ENCODE measurements at regions of chr14 and their contacts with region 1.

Region 1: DNA sequence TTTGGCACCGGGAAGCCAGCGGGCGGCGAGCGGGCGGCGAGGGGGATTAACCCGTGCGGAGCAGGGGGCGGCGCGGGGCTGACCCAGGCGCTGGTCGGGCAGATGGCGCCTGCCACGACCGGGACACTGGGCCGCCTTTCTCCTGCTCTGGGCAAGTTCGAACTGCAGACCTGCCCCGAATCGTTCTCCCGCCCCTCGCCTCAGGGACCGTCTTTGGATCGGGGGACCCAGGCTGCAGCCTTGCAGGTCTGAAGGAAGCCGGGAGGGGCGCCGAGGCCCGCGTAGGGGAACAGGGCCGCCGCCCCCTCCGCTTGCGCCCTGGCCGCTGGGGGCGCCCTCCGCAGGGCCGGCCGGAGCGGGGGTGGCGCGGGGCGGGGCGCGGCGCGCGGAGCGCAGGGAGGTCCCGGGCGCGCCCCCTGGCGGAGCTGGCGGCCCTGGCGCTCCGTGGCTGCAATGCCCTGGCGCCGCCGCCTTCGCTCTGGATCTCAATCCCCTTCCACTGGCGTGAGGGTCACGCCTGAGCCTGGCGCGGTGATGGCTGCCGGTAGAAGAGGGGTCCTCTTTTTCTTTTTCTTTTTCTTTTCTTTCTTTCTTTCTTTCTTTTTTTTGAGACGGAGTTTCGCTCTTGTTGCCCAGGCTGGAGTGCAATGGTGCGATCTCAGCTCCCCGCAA is 449 bp upstream of the LTBP2 start:
- DNase-seq: peak; percentile 70 to 94
- H3K4me3 ChIP-seq: peak overlapping the region; percentile 84
- H3K4me3 Mint-ChIP-seq: peak overlapping the region; percentile 74
- H3K27ac Mint-ChIP-seq: no peak overlapping the region
- H3K4me1 ChIP-seq: no peaks in the 10 kb centered on the region
- H3K4me1 Mint-ChIP-seq: peaks cover 10% of the 10 kb centered on the region
- H3K27me3 ChIP-seq: no peaks in the 10 kb centered on the region
- H3K27me3 Mint-ChIP-seq: peaks cover 8% of the 10 kb centered on the region
- CTCF ChIP-seq: peak; percentile 53 to 66

Region 2: GRCh38 chr14:74630881-74631690 is 18.6 kb after region 1 on chr14:
- CTCF ChIA-PET with region 1: interaction called, 10 read pairs
- POLR2A ChIA-PET with region 1: no interaction called
- intact Hi-C with region 1: loop called (anchors 2 kb)
- DNase-seq: no peak
- H3K4me3 ChIP-seq: no peak overlapping the region
- H3K4me3 Mint-ChIP-seq: no peak overlapping the region
- H3K27ac Mint-ChIP-seq: no peak overlapping the region
- H3K4me1 ChIP-seq: peaks cover 12% of the 10 kb centered on the region; the same call in 1 of the 2 replicates
- H3K4me1 Mint-ChIP-seq: peaks cover 14% of the 10 kb centered on the region
- H3K27me3 ChIP-seq: no peaks in the 10 kb centered on the region
- H3K27me3 Mint-ChIP-seq: no peaks in the 10 kb centered on the region
- CTCF ChIP-seq: no peak

Region 3: GRCh38 chr14:74712499-74713394 is 100.3 kb after region 1 on chr14 and contains the starts of genes AREL1 and FCF1:
- CTCF ChIA-PET with region 1: no interaction called
- POLR2A ChIA-PET with region 1: no interaction called
- intact Hi-C with region 1: loop called (anchors 2 kb)
- DNase-seq: peak; percentile 83 to 85
- H3K4me3 ChIP-seq: peak within 1 kb of the TSS; percentile 72
- H3K4me3 Mint-ChIP-seq: peak within 1 kb of the TSS; percentile 91
- H3K27ac Mint-ChIP-seq: peak within 1 kb of the TSS; percentile 90
- H3K4me1 ChIP-seq: 0 out of 2 replicates have a peak, but pooled peaks cover 3% of the 10 kb centered on the region
- H3K4me1 Mint-ChIP-seq: no peaks in the 10 kb centered on the region
- H3K27me3 ChIP-seq: no peaks in the 10 kb centered on the region
- H3K27me3 Mint-ChIP-seq: no peaks in the 10 kb centered on the region
- CTCF ChIP-seq: no peak
- total RNA-seq, gene AREL1: 38.0 and 41.5 TPM in 2 replicates
- total RNA-seq, gene FCF1: 58.3 and 62.5 TPM in 2 replicates

Region 4: GRCh38 chr14:74784634-74785033 is 172.1 kb after region 1 on chr14:
- CTCF ChIA-PET with region 1: interaction called, 10 read pairs
- POLR2A ChIA-PET with region 1: no interaction called
- intact Hi-C with region 1: no loop called
- DNase-seq: no peak
- H3K4me3 ChIP-seq: no peak overlapping the region
- H3K4me3 Mint-ChIP-seq: no peak overlapping the region
- H3K27ac Mint-ChIP-seq: no peak overlapping the region
- H3K4me1 ChIP-seq: no peaks in the 10 kb centered on the region
- H3K4me1 Mint-ChIP-seq: peaks cover 12% of the 10 kb centered on the region
- H3K27me3 ChIP-seq: no peaks in the 10 kb centered on the region
- H3K27me3 Mint-ChIP-seq: no peaks in the 10 kb centered on the region
- CTCF ChIP-seq: no peak

Region 5: DNA sequence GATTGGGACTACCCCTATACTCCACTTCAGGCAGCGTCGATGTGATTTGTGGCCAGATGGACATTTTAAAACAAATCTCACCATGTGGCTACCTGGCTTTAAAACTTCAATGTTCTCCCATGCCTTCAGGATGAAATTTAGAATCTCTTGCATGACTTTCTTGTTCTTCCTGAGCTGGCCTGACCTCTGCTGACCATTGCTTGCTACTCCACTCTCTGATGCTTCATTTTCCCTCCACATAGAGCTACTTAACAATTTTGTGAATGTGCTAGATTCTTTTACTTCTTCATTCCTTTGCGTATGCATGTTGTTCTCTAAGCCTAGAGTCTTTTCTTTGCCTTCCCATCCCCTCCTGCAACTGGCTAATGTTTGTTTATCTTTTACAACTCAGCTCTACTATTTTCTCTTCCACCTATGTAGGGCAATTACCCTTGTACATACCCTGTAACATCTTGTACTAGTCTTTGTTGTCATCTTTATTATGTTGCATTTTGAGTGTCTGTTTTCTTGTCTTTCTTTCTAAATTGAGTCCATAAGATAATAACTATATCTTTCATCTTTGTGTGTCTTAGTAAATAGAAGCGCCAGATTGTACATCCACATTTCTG is 191.8 kb after region 1 on chr14:
- CTCF ChIA-PET with region 1: interaction called, 35 read pairs
- POLR2A ChIA-PET with region 1: no interaction called
- intact Hi-C with region 1: loop called (anchors 1 kb)
- DNase-seq: peak in 1 of 2 experiments; percentile 31
- H3K4me3 ChIP-seq: no peak overlapping the region
- H3K4me3 Mint-ChIP-seq: no peak overlapping the region
- H3K27ac Mint-ChIP-seq: no peak overlapping the region
- H3K4me1 ChIP-seq: no peaks in the 10 kb centered on the region
- H3K4me1 Mint-ChIP-seq: no peaks in the 10 kb centered on the region
- H3K27me3 ChIP-seq: no peaks in the 10 kb centered on the region
- H3K27me3 Mint-ChIP-seq: no peaks in the 10 kb centered on the region
- CTCF ChIP-seq: peak; percentile 31 to 51

Region 6: DNA sequence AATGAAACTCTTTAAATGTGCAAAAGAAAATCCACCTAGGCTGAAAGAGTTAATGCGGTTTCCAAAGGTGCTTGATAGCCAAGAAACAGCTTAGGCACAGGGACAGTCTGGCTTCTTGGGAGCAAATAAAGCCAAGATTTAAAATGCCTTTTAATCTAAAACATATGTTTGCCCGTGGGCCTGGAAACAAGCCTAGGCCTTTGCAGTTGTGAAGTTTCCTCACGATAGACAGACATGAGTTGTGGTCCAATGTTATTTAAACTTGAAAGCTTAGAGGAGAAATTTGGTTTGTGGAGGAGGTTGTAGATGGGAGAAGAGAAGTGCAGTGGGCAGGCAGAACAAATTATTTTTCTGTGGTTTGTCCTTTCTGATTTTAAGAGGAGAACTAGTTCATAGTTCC is 233.7 kb after region 1 on chr14:
- CTCF ChIA-PET with region 1: interaction called, 5 read pairs
- POLR2A ChIA-PET with region 1: no interaction called
- intact Hi-C with region 1: loop called (anchors 5 kb)
- DNase-seq: no peak
- H3K4me3 ChIP-seq: no peak overlapping the region
- H3K4me3 Mint-ChIP-seq: no peak overlapping the region
- H3K27ac Mint-ChIP-seq: no peak overlapping the region
- H3K4me1 ChIP-seq: no peaks in the 10 kb centered on the region
- H3K4me1 Mint-ChIP-seq: no peaks in the 10 kb centered on the region
- H3K27me3 ChIP-seq: no peaks in the 10 kb centered on the region
- H3K27me3 Mint-ChIP-seq: no peaks in the 10 kb centered on the region
- CTCF ChIP-seq: no peak

Measured in Caco-2 (cell line).